RWPE1 (cell line): ENCODE measurements at regions of chr3 and their contacts with region 1.

Region 1: DNA sequence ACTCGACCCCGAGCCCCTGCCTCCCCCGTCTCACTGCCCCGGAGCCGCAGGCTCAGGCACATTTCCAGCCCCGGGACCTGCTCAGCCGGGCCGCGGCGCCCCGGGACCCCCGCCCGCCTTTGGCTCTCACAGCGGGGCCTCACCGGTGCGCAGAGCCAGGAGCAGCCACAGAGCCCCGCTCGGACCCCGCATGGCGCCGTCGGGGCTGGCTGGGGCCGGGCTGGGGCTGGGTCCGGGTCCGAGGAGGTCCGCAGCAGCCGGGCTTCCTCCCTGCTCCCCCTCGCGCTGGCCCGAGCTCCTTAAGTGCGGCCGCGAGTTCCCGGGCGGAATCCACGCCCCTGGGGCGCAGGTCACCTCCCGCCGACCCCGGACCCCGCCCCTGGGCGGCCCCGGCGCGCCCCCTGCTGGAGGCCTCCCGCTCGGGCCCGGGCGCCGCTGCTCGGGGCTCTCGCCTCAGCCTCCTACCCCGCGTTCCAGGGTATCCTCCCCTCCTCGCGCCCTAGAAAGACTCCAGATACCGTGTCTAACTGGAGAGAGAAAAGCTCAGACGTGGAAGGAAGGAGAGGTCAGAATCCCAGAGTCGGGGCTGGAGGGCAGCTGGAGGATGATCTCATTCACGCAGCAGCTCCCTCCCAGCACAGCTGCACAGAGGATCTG is at the start of gene MELTF:
- DNase-seq: peak; percentile 77
- H3K27ac ChIP-seq: peak within 1 kb of the TSS; percentile 69
- CTCF ChIP-seq: peak; percentile 90

Region 2: GRCh38 chr3:197002701-197003454 is 26.8 kb before region 1 on chr3:
- CTCF ChIA-PET with region 1: interaction called, 32 read pairs
- POLR2A ChIA-PET with region 1: interaction called, 3 read pairs
- DNase-seq: peak; percentile 95
- H3K27ac ChIP-seq: peak overlapping the region; percentile 81
- CTCF ChIP-seq: peak; percentile 91

Region 3: GRCh38 chr3:197010556-197011351 is 18.9 kb before region 1 on chr3:
- CTCF ChIA-PET with region 1: interaction called, 18 read pairs
- POLR2A ChIA-PET with region 1: no interaction called
- DNase-seq: no peak
- H3K27ac ChIP-seq: no peak overlapping the region
- CTCF ChIP-seq: no peak

Region 4: DNA sequence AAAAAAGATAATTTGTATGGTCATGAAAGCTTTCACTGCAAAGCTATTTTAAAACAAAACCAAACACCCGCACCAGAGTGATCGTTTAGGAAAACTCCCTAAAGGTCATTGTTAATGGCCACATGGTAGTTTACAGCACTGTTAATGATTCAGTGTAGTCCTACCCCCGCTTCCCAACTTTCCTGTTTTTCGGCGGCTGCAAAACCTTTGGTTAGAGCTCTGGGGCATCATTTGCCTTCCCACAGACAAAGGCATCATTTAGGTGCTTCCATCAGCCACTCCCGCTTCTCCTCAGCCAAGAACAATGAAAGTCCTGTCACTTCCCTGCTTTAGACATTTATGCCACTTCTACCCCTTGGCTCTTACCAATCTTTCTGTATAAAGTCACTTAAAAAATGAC is 10.6 kb before region 1 on chr3:
- CTCF ChIA-PET with region 1: interaction called, 21 read pairs
- POLR2A ChIA-PET with region 1: no interaction called
- DNase-seq: no peak
- H3K27ac ChIP-seq: no peak overlapping the region
- CTCF ChIP-seq: no peak

Region 5: GRCh38 chr3:197041875-197042488 is 12.3 kb after region 1 on chr3:
- CTCF ChIA-PET with region 1: no interaction called
- POLR2A ChIA-PET with region 1: no interaction called
- DNase-seq: no peak
- H3K27ac ChIP-seq: no peak overlapping the region
- CTCF ChIP-seq: no peak